Breast epithelium (tissue), 4 donors: ENCODE measurements at regions of chr7 and their contacts with region 1.

Region 1: GRCh38 chr7:11557627-11558026 is 274.4 kb downstream of the THSD7A start:
- DNase-seq: no peak
- H3K4me3 ChIP-seq: no peak overlapping the region
- H3K27ac ChIP-seq: no peak overlapping the region
- H3K4me1 ChIP-seq: no peaks in the 10 kb centered on the region
- H3K27me3 ChIP-seq: no peaks in the 10 kb centered on the region
- CTCF ChIP-seq: no peak
- POLR2A ChIP-seq: no peak

Region 2: DNA sequence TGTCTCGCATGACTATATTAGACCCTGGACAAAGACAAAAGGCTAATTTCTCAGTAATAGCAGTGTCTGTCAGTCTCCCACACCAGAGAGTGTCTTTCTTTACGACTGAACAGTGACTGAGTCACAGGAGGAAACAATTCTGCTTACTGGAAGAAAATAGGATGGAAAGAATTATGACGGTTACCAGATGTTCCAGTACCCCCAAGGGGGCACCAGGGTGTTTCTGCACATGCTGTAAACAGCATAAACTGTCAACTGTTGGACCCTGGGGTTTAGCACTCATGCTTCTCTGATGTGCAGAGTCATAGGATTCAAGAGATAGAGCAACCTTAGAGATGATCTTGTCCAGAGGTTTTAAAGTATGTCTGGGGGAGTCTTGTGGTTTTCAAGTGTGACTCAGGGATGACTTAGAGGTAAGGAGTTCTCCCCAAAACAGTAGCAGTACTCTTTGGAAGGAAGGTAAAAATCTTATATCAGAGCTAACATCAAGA is 17.3 kb before region 1 on chr7:
- intact Hi-C with region 1: no loop called
- DNase-seq: no peak
- H3K4me3 ChIP-seq: no peak overlapping the region
- H3K27ac ChIP-seq: no peak overlapping the region
- H3K4me1 ChIP-seq: no peaks in the 10 kb centered on the region
- H3K27me3 ChIP-seq: no peaks in the 10 kb centered on the region
- CTCF ChIP-seq: no peak
- POLR2A ChIP-seq: no peak

Region 3: GRCh38 chr7:11613292-11613930 is 55.8 kb after region 1 on chr7:
- intact Hi-C with region 1: loop called (anchors 2 kb)
- DNase-seq: no peak
- H3K4me3 ChIP-seq: no peak overlapping the region
- H3K27ac ChIP-seq: no peak overlapping the region
- H3K4me1 ChIP-seq: no peaks in the 10 kb centered on the region
- H3K27me3 ChIP-seq: no peaks in the 10 kb centered on the region
- CTCF ChIP-seq: no peak
- POLR2A ChIP-seq: no peak